AG04450 (cell line): ENCODE measurements at regions of chr11 and their contacts with region 1.

Region 1: DNA sequence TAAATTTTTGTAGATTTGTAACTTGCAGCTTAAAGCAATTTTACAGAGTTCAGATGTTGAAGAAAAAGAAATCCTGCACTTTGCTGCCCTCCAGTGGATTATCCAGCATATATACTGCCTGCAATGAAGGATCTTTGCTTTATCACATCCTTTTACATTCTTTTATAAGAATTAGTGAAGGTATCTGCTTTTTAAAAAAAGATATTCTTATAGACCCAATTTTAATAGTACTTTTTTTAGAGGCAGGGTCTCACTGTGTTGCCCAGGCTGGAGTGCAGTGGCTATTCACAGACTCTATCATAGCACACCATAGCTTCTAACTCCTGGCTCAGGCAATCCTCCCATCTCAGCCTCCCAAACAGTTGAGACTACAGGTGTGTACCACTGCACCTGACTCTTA is 60.7 kb downstream of the TTC17 start:
- DNase-seq: no peak
- H3K4me3 ChIP-seq: no peak overlapping the region
- H3K27ac ChIP-seq: no peak overlapping the region
- H3K27me3 ChIP-seq: no peaks in the 10 kb centered on the region
- CTCF ChIP-seq: peak; percentile 75

Region 2: GRCh38 chr11:42992594-42992993 is 426.9 kb before region 1 on chr11:
- CTCF ChIA-PET with region 1: no interaction called
- POLR2A ChIA-PET with region 1: no interaction called
- DNase-seq: no peak
- H3K4me3 ChIP-seq: no peak overlapping the region
- H3K27ac ChIP-seq: no peak overlapping the region
- H3K27me3 ChIP-seq: no peaks in the 10 kb centered on the region
- CTCF ChIP-seq: no peak

Region 3: GRCh38 chr11:43311791-43312607 is 107.5 kb before region 1 on chr11 and contains the start of gene API5:
- CTCF ChIA-PET with region 1: interaction called, 51 read pairs
- POLR2A ChIA-PET with region 1: no interaction called
- DNase-seq: peak; percentile 81
- H3K4me3 ChIP-seq: peak within 1 kb of the TSS; percentile 97
- H3K27ac ChIP-seq: peak within 1 kb of the TSS; percentile 78
- H3K27me3 ChIP-seq: no peaks in the 10 kb centered on the region
- CTCF ChIP-seq: peak; percentile 87
- polyA plus RNA-seq, gene API5: 66.7 and 89.5 TPM in 2 replicates

Region 4: DNA sequence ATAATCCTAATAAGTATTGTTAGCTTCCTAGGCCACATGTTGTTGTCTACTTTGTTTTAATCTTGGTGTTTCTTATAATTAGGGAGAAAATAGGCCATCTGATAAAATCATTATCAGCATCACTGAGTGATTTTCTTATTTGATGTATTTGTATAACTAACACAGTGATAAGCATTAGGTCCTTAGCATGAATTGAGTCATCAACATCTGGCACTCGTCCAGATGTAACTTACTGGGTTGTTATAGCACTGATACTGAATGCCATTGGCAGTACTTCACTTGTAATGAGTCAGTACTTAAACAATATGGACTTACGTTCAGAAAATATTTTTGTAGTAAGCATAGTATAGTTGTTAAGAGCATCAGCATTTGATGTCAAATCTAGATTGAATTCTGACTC is 91.5 kb before region 1 on chr11:
- CTCF ChIA-PET with region 1: interaction called, 24 read pairs
- POLR2A ChIA-PET with region 1: no interaction called
- DNase-seq: peak; percentile 89
- H3K4me3 ChIP-seq: no peak overlapping the region
- H3K27ac ChIP-seq: no peak overlapping the region
- H3K27me3 ChIP-seq: no peaks in the 10 kb centered on the region
- CTCF ChIP-seq: no peak

Region 5: GRCh38 chr11:43358801-43359421 is 60.5 kb before region 1 on chr11 and contains the start of gene TTC17:
- CTCF ChIA-PET with region 1: interaction called, 10 read pairs
- POLR2A ChIA-PET with region 1: no interaction called
- DNase-seq: peak; percentile 72
- H3K4me3 ChIP-seq: peak within 1 kb of the TSS; percentile 91
- H3K27ac ChIP-seq: peak within 1 kb of the TSS; percentile 73
- H3K27me3 ChIP-seq: no peaks in the 10 kb centered on the region
- CTCF ChIP-seq: no peak
- polyA plus RNA-seq, gene TTC17: 98.1 and 111 TPM in 2 replicates

Region 6: DNA sequence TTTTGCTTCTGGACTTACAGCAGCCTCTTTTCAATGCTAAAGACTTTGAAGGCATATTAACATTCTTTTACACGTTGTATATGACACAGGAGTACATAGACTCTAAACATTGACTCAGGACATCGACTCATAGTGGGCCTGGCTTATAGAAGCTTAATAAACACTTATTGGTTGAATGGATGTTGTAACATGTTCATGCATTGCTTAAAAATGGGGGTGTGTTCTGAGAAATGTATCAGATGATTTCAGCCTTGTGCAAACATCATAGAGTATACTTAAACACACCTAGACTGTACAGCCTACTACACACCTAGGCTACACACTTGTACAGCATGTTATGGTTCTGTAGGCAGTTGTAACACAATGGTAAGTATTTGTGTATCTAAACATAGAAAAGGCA is 42.9 kb before region 1 on chr11:
- CTCF ChIA-PET with region 1: interaction called, 15 read pairs
- POLR2A ChIA-PET with region 1: no interaction called
- DNase-seq: peak; percentile 59
- H3K4me3 ChIP-seq: no peak overlapping the region
- H3K27ac ChIP-seq: peak overlapping the region; percentile 31
- H3K27me3 ChIP-seq: no peaks in the 10 kb centered on the region
- CTCF ChIP-seq: no peak

Region 7: GRCh38 chr11:43404836-43405479 is 14.5 kb before region 1 on chr11:
- CTCF ChIA-PET with region 1: interaction called, 20 read pairs
- POLR2A ChIA-PET with region 1: no interaction called
- DNase-seq: no peak
- H3K4me3 ChIP-seq: no peak overlapping the region
- H3K27ac ChIP-seq: no peak overlapping the region
- H3K27me3 ChIP-seq: no peaks in the 10 kb centered on the region
- CTCF ChIP-seq: no peak

Region 8: GRCh38 chr11:43434893-43435292 is 15.4 kb after region 1 on chr11:
- CTCF ChIA-PET with region 1: interaction called, 10 read pairs
- POLR2A ChIA-PET with region 1: no interaction called
- DNase-seq: no peak
- H3K4me3 ChIP-seq: no peak overlapping the region
- H3K27ac ChIP-seq: no peak overlapping the region
- H3K27me3 ChIP-seq: no peaks in the 10 kb centered on the region
- CTCF ChIP-seq: no peak